ENCODE measurements at regions of chr7 and their contacts with region 1.

Region 1: DNA sequence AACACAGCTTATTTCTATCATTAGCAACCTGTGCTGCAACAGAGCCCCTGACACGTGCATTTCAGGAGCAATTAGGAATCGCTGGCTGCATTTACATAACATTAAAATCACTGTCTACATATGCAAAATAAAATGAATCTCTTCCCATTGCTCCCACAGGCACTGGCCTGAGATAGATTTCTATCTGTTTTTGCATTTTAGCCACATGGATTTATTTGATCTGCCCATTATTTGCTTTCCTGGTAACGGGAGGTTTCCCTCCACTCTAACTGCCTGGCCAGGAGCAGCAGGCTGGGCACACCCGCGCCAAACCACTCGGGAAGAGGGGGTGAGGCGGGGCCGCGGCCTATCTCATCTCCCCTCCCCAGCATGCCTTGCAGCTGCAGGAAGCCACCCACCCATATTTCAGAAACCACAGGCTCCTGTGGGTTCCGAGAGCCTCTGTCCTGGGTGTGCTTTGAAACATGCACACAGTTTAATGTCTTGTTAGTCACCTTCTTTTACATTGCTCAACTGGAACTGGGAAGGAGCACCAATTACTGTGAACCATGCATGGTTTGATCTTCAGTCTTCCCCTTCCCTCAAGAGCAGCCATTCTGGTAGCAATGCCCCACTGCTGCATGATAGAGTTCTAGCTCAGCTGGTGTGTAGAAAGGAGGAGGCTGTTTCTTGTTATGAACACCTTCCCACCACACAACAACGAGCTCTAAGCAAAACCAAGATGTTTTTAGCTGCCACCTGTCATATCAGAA is 37.7 kb upstream of the IKZF1 start:
- DNase-seq: peak; percentile 84
- ATAC-seq: peak; percentile 56
- H3K4me3 ChIP-seq: peak overlapping the region; percentile 31; the same call in 1 of the 2 replicates
- H3K27ac ChIP-seq: peak overlapping the region; percentile 77
- H3K4me1 ChIP-seq: peaks cover 87% of the 10 kb centered on the region
- H3K27me3 ChIP-seq: no peaks in the 10 kb centered on the region
- CTCF ChIP-seq: no peak
- EP300 ChIP-seq: peak in 1 of 2 experiments; percentile 38; a peak in 1 of 4 replicates
- POLR2A ChIP-seq: peak; percentile 27; the same call in 1 of the 2 replicates
- RAD21 ChIP-seq: no peak

Region 2: DNA sequence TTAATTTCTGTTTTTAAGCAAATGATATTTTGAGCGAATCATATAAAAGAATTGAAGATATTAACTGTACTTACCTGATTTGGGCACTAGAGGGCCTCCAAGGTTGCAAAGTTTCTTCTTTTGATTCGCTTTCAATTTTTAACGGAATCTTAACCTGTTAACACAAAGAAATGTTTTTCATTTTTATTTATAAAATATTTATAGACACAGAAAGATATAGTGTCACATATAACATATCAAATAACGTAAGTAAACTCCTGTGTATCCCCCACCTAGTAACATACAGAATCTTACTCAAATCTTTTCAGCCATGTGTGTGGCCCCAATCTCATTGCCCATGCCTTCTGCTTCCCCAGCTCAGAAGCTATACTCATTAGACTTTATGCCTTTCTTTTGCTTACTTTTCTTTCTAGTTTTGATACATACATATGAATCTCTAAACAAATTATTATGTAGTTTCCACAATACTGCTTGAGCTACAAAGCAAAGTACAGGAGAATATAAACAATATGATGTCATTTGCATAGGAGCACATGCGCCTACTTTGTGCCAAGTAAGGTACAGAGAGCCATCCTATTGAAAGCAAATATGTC is 124.3 kb before region 1 on chr7:
- CTCF ChIA-PET with region 1: interaction called, 13 read pairs
- POLR2A ChIA-PET with region 1: interaction called, 8 read pairs
- RAD21 ChIA-PET with region 1: interaction called, 126 read pairs
- SMC1A ChIA-PET with region 1: interaction called, 162 read pairs
- in situ Hi-C with region 1: no loop called
- intact Hi-C with region 1: no loop called
- DNase-seq: peak; percentile 24
- ATAC-seq: peak; percentile 51
- H3K4me3 ChIP-seq: no peak overlapping the region
- H3K27ac ChIP-seq: no peak overlapping the region
- H3K4me1 ChIP-seq: peaks cover 24% of the 10 kb centered on the region
- H3K27me3 ChIP-seq: no peaks in the 10 kb centered on the region; a peak in 1 of 4 replicates
- CTCF ChIP-seq: peak; percentile 55 to 61 (median 60)
- EP300 ChIP-seq: no peak
- POLR2A ChIP-seq: no peak
- RAD21 ChIP-seq: peak; percentile 85

Region 3: GRCh38 chr7:50212666-50213621 is 53.9 kb before region 1 on chr7:
- CTCF ChIA-PET with region 1: interaction called, 9 read pairs
- POLR2A ChIA-PET with region 1: interaction called, 3 read pairs
- RAD21 ChIA-PET with region 1: interaction called, 47 read pairs
- SMC1A ChIA-PET with region 1: interaction called, 238 read pairs
- in situ Hi-C with region 1: no loop called
- intact Hi-C with region 1: no loop called
- DNase-seq: no peak
- ATAC-seq: peak; percentile 70
- H3K4me3 ChIP-seq: no peak overlapping the region
- H3K27ac ChIP-seq: no peak overlapping the region
- H3K4me1 ChIP-seq: peaks cover 9% of the 10 kb centered on the region
- H3K27me3 ChIP-seq: no peaks in the 10 kb centered on the region
- CTCF ChIP-seq: peak; percentile 20 to 47 (median 25); a peak in 3 of 6 replicates
- EP300 ChIP-seq: 0 out of 4 replicates have a peak, but pooled peaks of 1 of the 2 experiments have one; percentile 11
- POLR2A ChIP-seq: no peak
- RAD21 ChIP-seq: peak; percentile 61

Region 4: GRCh38 chr7:50251765-50252164 is 15.0 kb before region 1 on chr7:
- CTCF ChIA-PET with region 1: no interaction called
- POLR2A ChIA-PET with region 1: no interaction called
- RAD21 ChIA-PET with region 1: no interaction called
- SMC1A ChIA-PET with region 1: interaction called, 33 read pairs
- in situ Hi-C with region 1: no loop called
- intact Hi-C with region 1: no loop called
- DNase-seq: no peak
- ATAC-seq: no peak
- H3K4me3 ChIP-seq: no peak overlapping the region
- H3K27ac ChIP-seq: no peak overlapping the region
- H3K4me1 ChIP-seq: no peaks in the 10 kb centered on the region
- H3K27me3 ChIP-seq: no peaks in the 10 kb centered on the region
- CTCF ChIP-seq: no peak
- EP300 ChIP-seq: no peak
- POLR2A ChIP-seq: no peak
- RAD21 ChIP-seq: no peak

Region 5: DNA sequence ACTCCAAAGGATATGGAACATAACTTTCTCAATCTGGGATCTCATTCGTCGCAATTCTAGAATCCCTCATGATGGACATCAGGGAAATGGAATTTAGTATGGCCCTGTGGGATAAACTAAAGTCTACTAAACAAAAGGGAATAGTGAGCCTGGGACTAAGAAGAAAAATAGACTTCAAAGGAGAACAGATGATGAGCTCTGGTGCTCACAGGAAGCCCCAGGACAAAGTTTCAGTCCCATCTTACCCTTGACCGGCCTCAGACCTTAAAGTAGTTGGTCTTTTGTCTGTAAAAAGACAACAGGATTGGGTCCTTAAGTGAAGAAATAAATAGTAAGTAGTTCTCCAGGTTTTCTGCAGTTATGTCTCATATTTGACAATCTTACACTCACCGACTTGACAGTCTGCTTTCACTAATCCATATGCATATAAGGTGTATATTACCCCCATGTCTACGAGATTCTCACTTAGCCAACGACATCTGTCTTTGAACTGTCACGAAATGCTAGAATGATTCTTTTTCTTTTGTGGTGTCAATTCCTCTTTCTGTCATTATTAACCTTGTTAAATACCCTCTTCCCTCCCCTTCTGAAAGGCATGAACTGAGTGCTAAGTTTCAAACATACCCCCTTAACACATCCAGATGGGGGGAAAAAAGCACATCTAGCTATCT is 26.8 kb after region 1 on chr7:
- CTCF ChIA-PET with region 1: interaction called, 29 read pairs
- POLR2A ChIA-PET with region 1: interaction called, 5 read pairs
- RAD21 ChIA-PET with region 1: interaction called, 53 read pairs
- SMC1A ChIA-PET with region 1: interaction called, 274 read pairs
- in situ Hi-C with region 1: no loop called
- intact Hi-C with region 1: no loop called
- DNase-seq: no peak
- ATAC-seq: peak; percentile 77
- H3K4me3 ChIP-seq: 0 out of 2 replicates have a peak overlapping the region, but pooled peaks have one; percentile 3
- H3K27ac ChIP-seq: peak overlapping the region; percentile 36
- H3K4me1 ChIP-seq: peaks cover 22% of the 10 kb centered on the region
- H3K27me3 ChIP-seq: no peaks in the 10 kb centered on the region
- CTCF ChIP-seq: no peak
- EP300 ChIP-seq: peak in 1 of 2 experiments; percentile 67; a peak in 1 of 4 replicates
- POLR2A ChIP-seq: no peak
- RAD21 ChIP-seq: no peak

Region 6: GRCh38 chr7:50349963-50350944 is 83.4 kb after region 1 on chr7:
- CTCF ChIA-PET with region 1: interaction called, 3 read pairs
- POLR2A ChIA-PET with region 1: interaction called, 6 read pairs
- RAD21 ChIA-PET with region 1: interaction called, 17 read pairs
- SMC1A ChIA-PET with region 1: interaction called, 26 read pairs
- in situ Hi-C with region 1: no loop called
- intact Hi-C with region 1: loop called (anchors 1 kb)
- DNase-seq: peak; percentile 84
- ATAC-seq: peak; percentile 90
- H3K4me3 ChIP-seq: no peak overlapping the region
- H3K27ac ChIP-seq: peak overlapping the region; percentile 86
- H3K4me1 ChIP-seq: peaks cover 31% of the 10 kb centered on the region
- H3K27me3 ChIP-seq: no peaks in the 10 kb centered on the region
- CTCF ChIP-seq: no peak
- EP300 ChIP-seq: peak; percentile 78 to 84
- POLR2A ChIP-seq: peak; percentile 44; the same call in 1 of the 2 replicates
- RAD21 ChIP-seq: 0 out of 2 replicates have a peak, but pooled peaks have one; percentile 24

Region 7: GRCh38 chr7:51198654-51199053 is 931.8 kb after region 1 on chr7:
- CTCF ChIA-PET with region 1: no interaction called
- POLR2A ChIA-PET with region 1: no interaction called
- RAD21 ChIA-PET with region 1: no interaction called
- SMC1A ChIA-PET with region 1: no interaction called
- in situ Hi-C with region 1: no loop called
- intact Hi-C with region 1: no loop called
- DNase-seq: no peak
- ATAC-seq: no peak
- H3K4me3 ChIP-seq: no peak overlapping the region
- H3K27ac ChIP-seq: no peak overlapping the region
- H3K4me1 ChIP-seq: no peaks in the 10 kb centered on the region
- H3K27me3 ChIP-seq: no peaks in the 10 kb centered on the region
- CTCF ChIP-seq: no peak
- EP300 ChIP-seq: no peak
- POLR2A ChIP-seq: no peak
- RAD21 ChIP-seq: no peak

Measured in GM12878 (cell line).